ENCODE measurements at regions of chr13 and their contacts with region 1.

Region 1: GRCh38 chr13:29847501-29847983 is 2.9 kb downstream of the UBL3 start:
- DNase-seq: no peak

Region 2: GRCh38 chr13:29733147-29733611 is 114.4 kb before region 1 on chr13:
- intact Hi-C with region 1: no loop called
- DNase-seq: no peak

Region 3: GRCh38 chr13:29771247-29771646 is 76.3 kb before region 1 on chr13:
- intact Hi-C with region 1: loop called (anchors 5 kb)
- DNase-seq: no peak

Region 4: DNA sequence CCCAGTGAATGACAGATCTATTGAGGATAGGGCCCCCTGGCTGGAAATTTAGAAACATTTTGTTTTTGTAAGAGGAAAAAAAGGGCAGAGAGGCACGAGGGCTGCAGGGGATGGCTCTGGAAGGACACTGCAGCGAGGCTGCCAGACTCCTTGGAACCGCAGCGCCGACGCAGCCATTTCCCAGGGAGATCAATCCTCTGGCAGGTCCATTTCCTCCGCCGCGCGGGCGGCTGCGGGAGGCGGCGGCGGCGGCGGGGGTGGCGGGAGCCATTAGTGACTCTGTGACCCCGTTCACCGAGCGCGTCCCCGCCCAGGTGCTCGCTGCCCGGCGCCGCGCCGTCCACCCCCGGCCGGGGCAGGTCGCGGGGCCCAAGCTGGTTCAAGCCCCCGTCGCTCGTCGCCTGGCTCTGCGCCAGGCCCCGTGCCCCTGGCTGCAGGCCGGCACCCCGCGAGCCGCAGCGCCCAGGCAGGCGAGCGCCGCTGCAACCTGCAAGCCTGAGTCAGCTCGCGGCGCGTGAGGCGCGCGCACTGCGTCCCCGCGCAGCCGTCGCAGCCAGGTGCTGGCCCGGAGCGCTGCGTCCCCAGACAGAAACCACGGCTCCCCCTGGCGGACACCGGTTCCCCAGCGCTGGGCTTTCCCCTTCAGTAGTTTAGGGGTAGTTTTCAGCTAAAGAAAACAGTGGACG is 267.2 kb after region 1 on chr13:
- intact Hi-C with region 1: loop called (anchors 2 kb)
- DNase-seq: peak; percentile 94